ENCODE measurements at regions of chr9 and their contacts with region 1.

Region 1: GRCh38 chr9:706606-707459 is 134.7 kb upstream of the DMRT1 start:
- DNase-seq: peak; percentile 71
- H3K4me3 Mint-ChIP-seq: peak overlapping the region; percentile 84
- H3K27ac Mint-ChIP-seq: peak overlapping the region; percentile 77
- H3K4me1 Mint-ChIP-seq: peaks cover 16% of the 10 kb centered on the region
- H3K27me3 Mint-ChIP-seq: no peaks in the 10 kb centered on the region

Region 2: DNA sequence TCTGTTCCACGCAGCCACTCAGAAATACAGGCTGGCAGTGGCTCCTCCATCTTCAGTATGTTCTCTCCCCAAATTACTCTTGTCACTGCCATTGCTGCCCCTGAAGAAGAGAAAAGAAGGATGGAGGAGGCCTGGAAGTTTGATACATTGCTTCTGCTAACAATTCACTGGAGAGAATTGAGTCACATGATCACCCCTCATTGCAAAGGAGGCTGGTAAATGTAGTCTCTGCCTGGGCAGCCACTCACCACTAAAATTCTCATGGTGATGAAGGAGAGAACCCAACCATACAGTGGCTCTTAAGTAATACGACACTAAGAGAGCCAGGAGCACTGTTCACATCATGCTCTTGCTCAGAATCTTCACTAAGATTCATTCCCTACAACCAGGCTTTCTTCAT is 380.2 kb before region 1 on chr9:
- CTCF ChIA-PET with region 1: no interaction called
- intact Hi-C with region 1: no loop called
- DNase-seq: no peak
- H3K4me3 Mint-ChIP-seq: no peak overlapping the region
- H3K27ac Mint-ChIP-seq: no peak overlapping the region
- H3K4me1 Mint-ChIP-seq: no peaks in the 10 kb centered on the region
- H3K27me3 Mint-ChIP-seq: no peaks in the 10 kb centered on the region

Region 3: DNA sequence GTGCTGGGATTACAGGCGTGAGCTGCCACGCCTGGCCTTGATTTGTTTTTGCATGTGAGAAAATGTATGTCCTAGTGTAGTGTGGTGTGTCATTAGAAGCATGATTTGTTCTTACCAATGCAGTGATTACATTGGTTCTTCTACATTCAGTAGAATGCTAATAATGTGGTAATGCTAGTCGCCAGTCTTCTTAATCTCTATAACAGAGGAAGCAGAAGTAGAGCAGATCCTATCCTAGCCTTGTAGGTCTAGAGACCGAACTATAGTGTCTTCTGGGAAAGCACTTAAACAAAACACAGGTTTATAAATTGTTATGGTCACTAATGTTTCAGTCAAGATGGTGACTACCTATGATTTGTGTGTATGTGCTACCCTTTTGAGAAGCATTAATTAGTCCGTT is 62.9 kb before region 1 on chr9:
- CTCF ChIA-PET with region 1: no interaction called
- intact Hi-C with region 1: no loop called
- DNase-seq: no peak
- H3K4me3 Mint-ChIP-seq: no peak overlapping the region
- H3K27ac Mint-ChIP-seq: no peak overlapping the region
- H3K4me1 Mint-ChIP-seq: peaks cover 25% of the 10 kb centered on the region
- H3K27me3 Mint-ChIP-seq: no peaks in the 10 kb centered on the region

Region 4: DNA sequence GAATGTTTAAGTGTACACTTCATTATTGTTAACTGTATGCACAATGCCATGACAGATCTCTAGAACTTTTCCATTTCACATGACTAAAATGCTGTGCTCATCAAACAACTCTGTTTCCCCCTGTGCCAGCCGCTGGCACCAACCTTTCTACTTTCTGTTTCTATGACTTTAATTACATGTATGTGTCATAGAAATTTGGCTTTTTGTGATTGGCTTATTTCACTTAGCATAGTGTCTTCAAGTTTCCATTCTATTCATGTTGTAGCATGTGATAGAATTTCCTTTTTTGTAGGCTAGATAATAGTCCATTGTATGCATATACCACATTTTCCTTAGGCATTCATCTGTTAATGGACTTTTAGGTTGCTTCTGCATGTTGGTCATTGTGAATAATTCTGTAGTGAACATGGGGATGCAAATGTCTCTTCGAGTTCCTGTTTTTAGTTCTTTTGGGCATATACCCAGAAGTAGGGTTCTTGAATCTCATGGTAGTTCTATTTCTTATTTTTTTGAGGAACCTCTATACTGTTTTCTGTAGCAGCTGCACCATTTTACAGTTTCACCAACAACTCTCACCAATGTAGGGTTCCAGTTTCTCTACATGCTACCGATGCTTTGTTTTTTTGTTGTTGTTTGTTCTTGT is 49.8 kb before region 1 on chr9:
- CTCF ChIA-PET with region 1: no interaction called
- intact Hi-C with region 1: loop called (anchors 5 kb)
- DNase-seq: peak; percentile 52
- H3K4me3 Mint-ChIP-seq: no peak overlapping the region
- H3K27ac Mint-ChIP-seq: peak overlapping the region; percentile 1
- H3K4me1 Mint-ChIP-seq: peaks cover 36% of the 10 kb centered on the region
- H3K27me3 Mint-ChIP-seq: no peaks in the 10 kb centered on the region

Measured in activated naive CD4-positive, alpha-beta T cell treated with anti-CD3 and anti-CD28 coated beads for 36 hours (primary cell).